Tibial artery (tissue), 4 donors: ENCODE measurements at regions of chr11 and their contacts with region 1.

Region 1: DNA sequence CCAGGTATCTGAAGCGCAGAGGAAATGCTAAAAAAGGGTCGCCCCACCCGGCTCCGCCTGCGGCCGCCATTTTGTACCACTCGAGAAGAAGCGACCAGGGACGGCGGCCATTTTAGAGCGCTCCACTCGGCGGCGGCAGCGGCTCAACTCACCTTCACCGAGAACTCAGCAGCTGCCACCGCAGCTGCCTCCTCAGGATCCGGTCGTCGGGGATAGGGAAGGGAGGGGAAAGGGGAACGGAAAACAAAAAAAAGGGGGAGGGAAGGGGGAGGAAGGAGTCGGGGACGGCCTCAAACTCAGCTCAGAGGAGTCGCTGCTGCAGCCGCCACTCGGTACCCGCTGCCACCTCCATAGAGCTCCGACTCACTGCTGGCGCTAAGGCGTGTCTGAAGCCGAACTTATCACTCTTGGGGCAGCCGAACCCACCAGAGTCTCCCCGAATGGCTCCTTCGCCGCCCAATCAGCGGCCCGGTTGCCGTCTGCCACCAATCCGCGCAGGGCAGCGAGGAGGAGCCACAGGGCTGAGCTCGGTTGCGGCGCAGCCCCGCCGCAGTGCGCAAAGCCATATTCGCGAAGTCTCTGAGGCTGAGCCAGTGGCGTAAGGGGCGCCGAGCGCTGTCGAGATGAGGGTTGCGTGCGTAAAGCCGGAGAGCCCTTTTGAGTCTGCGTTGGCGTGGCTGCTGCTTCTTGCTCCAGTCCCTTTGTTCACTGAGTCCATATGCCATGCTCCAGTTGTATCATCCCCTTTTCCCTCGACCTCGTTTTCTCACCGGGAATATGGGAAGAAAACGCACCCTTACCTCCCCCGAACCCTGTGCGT is at the start of gene EIF4G2:
- DNase-seq: peak; percentile 98 to 99
- H3K4me3 ChIP-seq: peak within 1 kb of the TSS; percentile 93 to 98
- H3K27ac ChIP-seq: peak within 1 kb of the TSS; percentile 100
- H3K4me1 ChIP-seq: peaks cover 0 to 43% (median 29%) of the 10 kb centered on the region in 4 donors
- H3K27me3 ChIP-seq: no peaks in the 10 kb centered on the region
- CTCF ChIP-seq: peak in 1 of 2 experiments; percentile 25

Region 2: DNA sequence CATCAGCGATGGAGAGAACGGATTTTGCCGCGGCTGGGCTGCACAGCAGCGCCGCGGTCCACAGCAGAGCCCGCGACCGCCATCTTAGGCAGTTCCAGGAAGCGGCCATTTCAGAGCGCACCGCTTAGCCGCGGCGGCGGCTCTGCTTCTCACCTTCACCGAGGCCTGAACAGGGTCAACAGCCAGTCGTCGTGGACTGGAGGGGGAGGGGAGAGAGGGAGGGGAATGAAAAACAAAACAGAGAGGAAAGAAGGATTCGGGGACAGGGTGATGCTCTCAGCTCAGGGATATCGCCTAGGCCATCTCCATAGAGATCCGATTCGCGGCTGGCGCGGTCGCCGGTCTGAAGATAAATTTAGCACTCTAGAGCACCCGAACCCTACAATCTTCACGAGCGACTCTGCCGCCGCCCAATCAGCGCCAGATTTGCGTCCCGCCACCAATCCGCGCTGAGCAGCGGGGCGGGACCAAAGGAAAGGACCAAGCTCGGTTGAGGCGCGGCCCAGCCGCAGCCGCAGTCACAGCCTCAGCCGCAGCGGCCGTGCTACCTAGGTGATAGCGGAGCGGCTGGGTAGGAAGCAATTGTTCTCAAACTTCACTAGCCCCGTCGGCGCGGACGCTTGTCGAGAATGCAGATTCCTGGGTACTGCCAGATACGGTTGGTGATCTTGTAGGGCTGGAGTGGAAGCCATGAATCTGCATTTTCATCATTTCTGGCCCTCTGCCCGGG is 49.1 kb after region 1 on chr11 and contains the start of gene ZBED5:
- intact Hi-C with region 1: loop called (anchors 5 kb)
- DNase-seq: peak; percentile 98 to 99
- H3K4me3 ChIP-seq: peak within 1 kb of the TSS; percentile 63 to 64
- H3K27ac ChIP-seq: peak within 1 kb of the TSS; percentile 91 to 94
- H3K4me1 ChIP-seq: peaks cover 0 to 60% (median 31%) of the 10 kb centered on the region in 4 donors
- H3K27me3 ChIP-seq: no peaks in the 10 kb centered on the region
- CTCF ChIP-seq: peak; percentile 8 to 24